ENCODE measurements at regions of chr1 and their contacts with region 1.

Region 1: GRCh38 chr1:24847995-24848881 is 81.8 kb downstream of the RUNX3 start:
- DNase-seq: peak; percentile 80 to 95 (median 88)
- ATAC-seq: peak; percentile 93
- H3K4me3 ChIP-seq: peak overlapping the region; percentile 57
- H3K4me3 Mint-ChIP-seq: peak overlapping the region; percentile 74
- H3K27ac ChIP-seq: peak overlapping the region; percentile 13 to 55
- H3K27ac Mint-ChIP-seq: no peak overlapping the region
- H3K4me1 ChIP-seq: peaks cover 25% of the 10 kb centered on the region
- H3K4me1 Mint-ChIP-seq: peaks cover 9% of the 10 kb centered on the region
- H3K27me3 ChIP-seq: no peaks in the 10 kb centered on the region
- H3K27me3 Mint-ChIP-seq: no peaks in the 10 kb centered on the region
- CTCF ChIP-seq: peak; percentile 89

Region 2: GRCh38 chr1:24897767-24898483 is 49.7 kb after region 1 on chr1:
- CTCF ChIA-PET with region 1: interaction called, 4 read pairs
- POLR2A ChIA-PET with region 1: interaction called, 3 read pairs
- intact Hi-C with region 1: loop called in 1 of 2 experiments (anchors 5 kb)
- DNase-seq: peak in 11 of 14 experiments; percentile 26 to 68 (median 38)
- ATAC-seq: peak; percentile 64
- H3K4me3 ChIP-seq: no peak overlapping the region
- H3K4me3 Mint-ChIP-seq: peak overlapping the region; percentile 20
- H3K27ac ChIP-seq: no peak overlapping the region
- H3K27ac Mint-ChIP-seq: peak overlapping the region; percentile 76
- H3K4me1 ChIP-seq: peaks cover 43% of the 10 kb centered on the region
- H3K4me1 Mint-ChIP-seq: peaks cover 25% of the 10 kb centered on the region
- H3K27me3 ChIP-seq: no peaks in the 10 kb centered on the region
- H3K27me3 Mint-ChIP-seq: no peaks in the 10 kb centered on the region
- CTCF ChIP-seq: peak; percentile 71

Region 3: DNA sequence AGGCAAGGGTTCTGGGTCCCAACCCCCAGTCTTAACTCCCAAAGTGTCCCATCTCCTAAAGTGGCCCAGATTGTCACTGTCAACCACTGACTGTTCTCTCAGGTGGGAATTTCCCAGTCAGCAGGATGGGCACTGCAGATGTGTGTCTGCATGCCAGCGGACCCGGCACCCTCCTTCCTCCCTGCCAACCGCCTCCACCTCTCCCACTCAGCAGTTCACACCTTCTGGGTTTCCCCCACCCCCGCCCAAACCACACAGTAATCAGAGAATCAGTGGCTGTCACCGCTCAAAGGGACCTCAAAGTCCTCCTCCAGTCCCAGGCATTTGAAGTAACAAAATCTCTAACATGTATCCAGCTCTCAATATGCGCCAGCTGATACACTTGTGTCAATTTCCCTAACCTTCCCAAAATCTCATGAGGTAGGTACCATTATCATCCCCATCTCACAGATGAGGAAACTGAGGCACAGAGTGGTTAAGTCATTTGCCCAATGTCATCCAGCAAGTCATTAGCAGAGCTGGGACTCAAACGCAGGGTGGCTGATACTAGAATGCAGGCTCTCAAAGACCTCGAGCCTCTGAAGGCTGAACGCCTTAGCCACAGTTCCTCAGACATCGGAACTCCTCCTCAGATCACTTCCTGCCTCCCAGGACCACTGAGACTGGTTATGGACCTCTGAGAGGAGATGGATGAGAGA is 77.0 kb after region 1 on chr1:
- CTCF ChIA-PET with region 1: interaction called, 10 read pairs
- POLR2A ChIA-PET with region 1: interaction called, 27 read pairs
- intact Hi-C with region 1: loop called (anchors 1 kb)
- DNase-seq: peak; percentile 52 to 98 (median 70)
- ATAC-seq: peak; percentile 57
- H3K4me3 ChIP-seq: peak overlapping the region; percentile 83
- H3K4me3 Mint-ChIP-seq: peak overlapping the region; percentile 99
- H3K27ac ChIP-seq: peak overlapping the region; percentile 73 to 91
- H3K27ac Mint-ChIP-seq: peak overlapping the region; percentile 98
- H3K4me1 ChIP-seq: peaks cover 81% of the 10 kb centered on the region
- H3K4me1 Mint-ChIP-seq: peaks cover 76% of the 10 kb centered on the region
- H3K27me3 ChIP-seq: no peaks in the 10 kb centered on the region
- H3K27me3 Mint-ChIP-seq: no peaks in the 10 kb centered on the region
- CTCF ChIP-seq: no peak

Region 4: GRCh38 chr1:25037174-25038074 is 189.2 kb after region 1 on chr1:
- CTCF ChIA-PET with region 1: interaction called, 26 read pairs
- POLR2A ChIA-PET with region 1: interaction called, 17 read pairs
- intact Hi-C with region 1: loop called (anchors 1 kb)
- DNase-seq: peak; percentile 52 to 84 (median 63)
- ATAC-seq: peak; percentile 77
- H3K4me3 ChIP-seq: no peak overlapping the region
- H3K4me3 Mint-ChIP-seq: peak overlapping the region; percentile 4
- H3K27ac ChIP-seq: no peak overlapping the region
- H3K27ac Mint-ChIP-seq: peak overlapping the region; percentile 28
- H3K4me1 ChIP-seq: peaks cover 56% of the 10 kb centered on the region
- H3K4me1 Mint-ChIP-seq: peaks cover 30% of the 10 kb centered on the region
- H3K27me3 ChIP-seq: no peaks in the 10 kb centered on the region
- H3K27me3 Mint-ChIP-seq: no peaks in the 10 kb centered on the region
- CTCF ChIP-seq: peak; percentile 72

Region 5: GRCh38 chr1:25099343-25099951 is 251.2 kb after region 1 on chr1:
- CTCF ChIA-PET with region 1: no interaction called
- POLR2A ChIA-PET with region 1: interaction called, 15 read pairs
- intact Hi-C with region 1: loop called (anchors 1 kb)
- DNase-seq: peak in 8 of 14 experiments; percentile 6 to 74 (median 34)
- ATAC-seq: peak; percentile 55
- H3K4me3 ChIP-seq: no peak overlapping the region
- H3K4me3 Mint-ChIP-seq: peak overlapping the region; percentile 5
- H3K27ac ChIP-seq: no peak overlapping the region
- H3K27ac Mint-ChIP-seq: peak overlapping the region; percentile 24
- H3K4me1 ChIP-seq: peaks cover 66% of the 10 kb centered on the region
- H3K4me1 Mint-ChIP-seq: peaks cover 66% of the 10 kb centered on the region
- H3K27me3 ChIP-seq: no peaks in the 10 kb centered on the region
- H3K27me3 Mint-ChIP-seq: no peaks in the 10 kb centered on the region
- CTCF ChIP-seq: no peak

Region 6: DNA sequence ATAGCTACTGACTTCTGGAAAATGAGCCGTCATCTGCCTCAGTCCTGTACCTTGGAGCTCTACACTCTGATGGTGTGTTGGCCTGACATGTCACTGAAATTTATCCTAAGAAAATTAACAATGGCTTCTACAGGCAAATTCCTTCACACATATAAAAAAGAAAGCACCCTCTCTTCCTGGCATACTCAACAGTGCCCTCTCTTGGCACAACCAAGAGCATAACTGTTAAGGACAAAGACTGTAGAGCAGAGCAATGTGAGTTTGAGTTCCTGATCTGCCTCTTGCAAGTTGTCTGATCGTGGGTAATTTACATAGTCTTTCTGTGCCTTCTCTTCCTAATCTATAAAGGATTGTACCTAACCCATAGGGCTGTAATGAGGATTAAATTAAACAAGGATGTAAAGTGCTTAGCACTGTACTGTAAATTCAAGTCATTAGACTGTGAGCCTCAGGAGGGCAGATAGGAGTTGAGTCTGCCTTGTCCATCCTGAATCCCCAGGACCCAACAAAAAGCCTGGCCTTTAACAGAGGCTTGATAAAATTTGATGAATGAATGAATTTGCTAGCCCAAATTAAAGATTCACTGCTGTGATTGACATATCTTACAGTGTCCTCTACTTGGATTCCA is 300.5 kb after region 1 on chr1:
- CTCF ChIA-PET with region 1: no interaction called
- POLR2A ChIA-PET with region 1: no interaction called
- intact Hi-C with region 1: loop called (anchors 1 to 5 kb)
- DNase-seq: peak in 8 of 14 experiments; percentile 4 to 66 (median 28)
- ATAC-seq: peak; percentile 41
- H3K4me3 ChIP-seq: no peak overlapping the region
- H3K4me3 Mint-ChIP-seq: no peak overlapping the region
- H3K27ac ChIP-seq: no peak overlapping the region
- H3K27ac Mint-ChIP-seq: no peak overlapping the region
- H3K4me1 ChIP-seq: no peaks in the 10 kb centered on the region
- H3K4me1 Mint-ChIP-seq: no peaks in the 10 kb centered on the region
- H3K27me3 ChIP-seq: peaks cover 2 to 8% of the 10 kb centered on the region in 2 experiments
- H3K27me3 Mint-ChIP-seq: peaks cover 49% of the 10 kb centered on the region
- CTCF ChIP-seq: peak; percentile 55

Region 7: DNA sequence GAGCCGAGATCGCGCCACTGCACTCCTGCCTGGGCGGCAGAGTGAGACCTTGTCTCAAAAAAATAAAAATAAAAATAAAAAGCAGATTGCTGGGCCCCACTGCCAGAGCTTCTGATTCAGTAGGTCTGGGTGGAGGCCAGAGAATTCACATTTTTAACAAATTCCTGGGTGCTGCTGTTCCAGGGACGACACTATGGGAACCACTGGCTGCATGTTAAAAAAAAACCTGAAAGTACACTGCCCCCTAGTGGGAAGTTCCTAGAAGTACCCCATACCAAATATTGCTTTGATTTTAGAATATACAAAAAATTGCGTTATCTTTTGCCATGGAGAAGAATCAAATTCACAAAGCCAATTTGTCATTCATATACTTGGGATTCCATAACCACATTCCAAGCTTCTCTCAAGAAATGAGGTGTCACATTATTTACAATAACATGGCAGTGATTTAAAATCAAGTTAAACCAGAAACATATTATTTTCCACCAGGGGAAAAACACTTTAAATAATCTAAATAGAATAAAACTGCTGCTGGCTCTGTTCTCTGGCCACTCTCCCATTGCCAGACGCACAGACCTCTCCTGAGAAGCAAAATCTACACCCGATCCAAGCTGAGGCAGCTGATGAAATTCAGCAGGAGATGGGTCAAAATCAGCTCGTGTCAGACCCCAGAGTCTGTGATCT is 356.7 kb after region 1 on chr1:
- CTCF ChIA-PET with region 1: no interaction called
- POLR2A ChIA-PET with region 1: no interaction called
- intact Hi-C with region 1: loop called (anchors 1 kb)
- DNase-seq: peak in 6 of 14 experiments; percentile 6 to 73 (median 34)
- ATAC-seq: peak; percentile 74
- H3K4me3 ChIP-seq: no peak overlapping the region
- H3K4me3 Mint-ChIP-seq: no peak overlapping the region
- H3K27ac ChIP-seq: no peak overlapping the region
- H3K27ac Mint-ChIP-seq: no peak overlapping the region
- H3K4me1 ChIP-seq: peaks cover 3% of the 10 kb centered on the region
- H3K4me1 Mint-ChIP-seq: no peaks in the 10 kb centered on the region
- H3K27me3 ChIP-seq: no peaks in the 10 kb centered on the region
- H3K27me3 Mint-ChIP-seq: no peaks in the 10 kb centered on the region
- CTCF ChIP-seq: peak; percentile 88